ENCODE measurements at regions of chr13 and their contacts with region 1.

Region 1: GRCh38 chr13:32381539-32381938 is 46.4 kb downstream of the N4BP2L1 start:
- DNase-seq: no peak
- H3K4me3 ChIP-seq: no peak overlapping the region
- H3K27me3 ChIP-seq: no peaks in the 10 kb centered on the region
- CTCF ChIP-seq: peak; percentile 52

Region 2: GRCh38 chr13:32098272-32098671 is 283.3 kb before region 1 on chr13:
- CTCF ChIA-PET with region 1: no interaction called
- POLR2A ChIA-PET with region 1: no interaction called
- DNase-seq: no peak
- H3K4me3 ChIP-seq: no peak overlapping the region
- H3K27me3 ChIP-seq: no peaks in the 10 kb centered on the region
- CTCF ChIP-seq: no peak

Region 3: DNA sequence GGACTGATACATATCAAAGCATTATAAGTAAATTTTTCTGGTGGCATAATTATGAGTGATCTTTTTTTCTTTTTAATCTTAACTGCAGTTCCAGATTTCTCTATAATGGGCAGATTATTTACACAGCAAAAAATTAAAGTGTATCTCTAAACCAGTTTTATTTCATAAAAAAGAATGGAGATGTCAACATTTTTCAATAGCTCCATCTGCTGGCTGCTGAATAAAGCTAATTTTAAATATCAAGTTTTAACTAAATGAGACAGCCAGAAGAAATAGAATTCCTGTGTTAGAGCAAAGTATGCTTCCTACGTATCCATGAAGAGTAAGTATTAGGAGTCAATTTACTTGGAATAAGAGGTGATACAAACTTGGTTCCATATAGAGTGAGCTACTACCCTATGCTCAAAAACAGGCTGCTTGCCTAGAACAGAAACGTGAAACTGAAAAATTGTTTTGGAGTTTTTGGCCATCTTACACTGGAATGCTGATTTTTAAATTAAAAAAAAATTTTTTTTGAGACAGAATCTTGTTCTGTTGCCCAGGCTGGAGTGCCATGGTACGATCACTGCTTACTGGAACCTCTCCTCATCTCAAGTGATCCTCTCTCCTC is 199.7 kb after region 1 on chr13:
- CTCF ChIA-PET with region 1: interaction called, 30 read pairs
- POLR2A ChIA-PET with region 1: no interaction called
- DNase-seq: no peak
- H3K4me3 ChIP-seq: no peak overlapping the region
- H3K27me3 ChIP-seq: no peaks in the 10 kb centered on the region; the same call in 1 of the 2 replicates
- CTCF ChIP-seq: peak; percentile 49

Region 4: DNA sequence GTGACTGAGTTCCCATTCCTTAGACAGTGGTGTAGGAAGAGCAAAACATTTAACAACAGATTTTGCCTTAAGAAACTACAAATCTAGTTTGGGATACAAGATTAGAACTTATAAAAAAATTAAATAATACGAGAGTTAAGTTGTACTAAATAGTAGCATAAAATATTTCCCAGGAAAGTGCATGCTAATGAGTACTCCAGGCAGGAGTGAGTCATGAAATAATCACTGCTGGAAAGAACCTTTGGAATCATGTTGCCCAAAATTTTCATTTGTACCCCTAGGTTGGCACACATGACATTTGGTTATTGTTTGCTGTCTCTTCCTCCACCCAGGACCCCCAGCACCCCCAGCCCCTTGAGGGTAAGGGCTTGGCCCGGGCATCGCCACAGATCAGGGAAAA is 608.4 kb after region 1 on chr13:
- CTCF ChIA-PET with region 1: no interaction called
- POLR2A ChIA-PET with region 1: no interaction called
- DNase-seq: no peak
- H3K4me3 ChIP-seq: no peak overlapping the region
- H3K27me3 ChIP-seq: peaks cover 5% of the 10 kb centered on the region; the same call in 1 of the 2 replicates
- CTCF ChIP-seq: no peak

Measured in BJ (cell line).